HepG2 (cell line): ENCODE measurements at regions of chr5 and their contacts with region 1.

Region 1: GRCh38 chr5:61768692-61769281 is 436.7 kb downstream of the ZSWIM6 start:
- DNase-seq: peak; percentile 70
- ATAC-seq: peak; percentile 100
- H3K4me3 ChIP-seq: no peak overlapping the region
- H3K27ac ChIP-seq: no peak overlapping the region
- H3K4me1 ChIP-seq: no peaks in the 10 kb centered on the region
- H3K27me3 ChIP-seq: no peaks in the 10 kb centered on the region; a peak in 1 of 5 replicates
- CTCF ChIP-seq: peak; percentile 72
- EP300 ChIP-seq: no peak
- POLR2A ChIP-seq: no peak
- RAD21 ChIP-seq: peak; percentile 48; the same call in 1 of the 2 replicates

Region 2: DNA sequence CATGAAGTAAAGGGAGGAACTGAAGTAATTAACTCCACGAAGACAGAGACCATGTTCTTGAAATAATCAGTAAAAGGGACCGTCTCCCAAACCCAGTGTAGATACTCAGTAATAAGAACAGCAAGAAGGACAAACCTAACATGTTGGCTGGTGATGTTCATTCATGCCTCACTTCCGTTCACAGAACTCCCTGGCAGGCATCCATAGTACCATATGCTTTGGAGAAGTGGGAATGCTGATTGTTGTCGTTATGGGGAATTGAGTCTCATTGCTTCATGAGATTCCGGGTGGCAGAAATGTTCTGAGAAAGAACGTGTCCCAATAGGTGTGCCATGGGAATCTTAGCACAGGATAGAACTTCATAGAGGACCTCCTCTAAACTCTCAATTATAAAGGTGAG is 15.6 kb after region 1 on chr5:
- CTCF ChIA-PET with region 1: no interaction called
- POLR2A ChIA-PET with region 1: no interaction called
- in situ Hi-C with region 1: no loop called
- intact Hi-C with region 1: no loop called
- DNase-seq: no peak
- ATAC-seq: no peak
- H3K4me3 ChIP-seq: no peak overlapping the region
- H3K27ac ChIP-seq: no peak overlapping the region
- H3K4me1 ChIP-seq: no peaks in the 10 kb centered on the region
- H3K27me3 ChIP-seq: peaks cover 0 to 4% of the 10 kb centered on the region in 2 experiments; a peak in 2 of 5 replicates
- CTCF ChIP-seq: no peak
- EP300 ChIP-seq: no peak
- POLR2A ChIP-seq: no peak
- RAD21 ChIP-seq: no peak

Region 3: DNA sequence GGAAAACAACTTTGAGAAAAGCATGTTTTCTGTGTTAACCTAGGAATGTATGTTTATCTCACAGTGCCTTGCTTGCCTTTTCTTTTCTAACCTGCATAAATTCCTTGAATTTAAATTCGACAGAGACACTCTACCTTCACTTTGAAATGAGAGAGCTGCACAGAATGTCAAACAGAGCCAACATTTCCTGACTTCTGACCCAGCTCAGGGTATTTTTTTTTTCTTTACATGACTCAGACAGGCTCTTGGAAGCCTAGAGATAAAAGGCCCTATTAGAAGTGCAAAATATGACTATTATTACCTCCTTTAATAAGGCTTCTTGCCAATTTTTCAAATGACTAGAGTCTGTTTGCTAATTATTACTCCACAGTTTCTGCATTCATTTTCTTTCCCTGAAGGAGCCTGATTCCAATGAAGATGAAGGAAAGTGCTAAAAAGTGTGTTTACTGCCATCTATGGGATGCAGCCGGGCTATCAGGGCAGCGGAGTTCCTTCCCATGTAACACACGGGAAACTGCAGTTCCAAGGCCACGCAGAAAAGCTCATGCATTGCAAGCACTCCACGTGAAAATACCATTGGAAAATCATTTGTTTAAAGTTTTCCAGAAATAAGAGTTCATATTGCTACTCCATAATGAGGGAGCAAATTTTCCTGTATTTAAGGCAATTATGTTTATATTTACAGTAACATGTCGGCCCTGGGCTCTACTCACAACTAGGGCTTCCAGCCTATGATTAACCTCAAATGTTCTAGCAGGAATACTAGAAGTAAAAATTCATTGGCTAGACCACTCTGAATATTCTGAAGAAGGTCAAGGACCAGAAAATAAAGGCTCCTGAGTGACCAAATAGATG is 48.9 kb after region 1 on chr5:
- CTCF ChIA-PET with region 1: interaction called, 10 read pairs
- POLR2A ChIA-PET with region 1: no interaction called
- in situ Hi-C with region 1: no loop called
- intact Hi-C with region 1: loop called (anchors 2 kb)
- DNase-seq: peak; percentile 5
- ATAC-seq: peak; percentile 90
- H3K4me3 ChIP-seq: no peak overlapping the region
- H3K27ac ChIP-seq: no peak overlapping the region
- H3K4me1 ChIP-seq: no peaks in the 10 kb centered on the region; the same call in 1 of the 2 replicates
- H3K27me3 ChIP-seq: peaks cover 0 to 3% of the 10 kb centered on the region in 2 experiments; a peak in 3 of 5 replicates
- CTCF ChIP-seq: peak; percentile 67
- EP300 ChIP-seq: no peak
- POLR2A ChIP-seq: no peak
- RAD21 ChIP-seq: no peak

Region 4: GRCh38 chr5:62143268-62144229 is 374.8 kb after region 1 on chr5:
- CTCF ChIA-PET with region 1: no interaction called
- POLR2A ChIA-PET with region 1: no interaction called
- in situ Hi-C with region 1: no loop called
- intact Hi-C with region 1: loop called (anchors 5 kb)
- DNase-seq: peak; percentile 13
- ATAC-seq: peak; percentile 61
- H3K4me3 ChIP-seq: no peak overlapping the region; a peak in 1 of 6 replicates
- H3K27ac ChIP-seq: no peak overlapping the region
- H3K4me1 ChIP-seq: no peaks in the 10 kb centered on the region
- H3K27me3 ChIP-seq: peaks cover 0 to 14% of the 10 kb centered on the region in 2 experiments; a peak in 3 of 5 replicates
- CTCF ChIP-seq: peak; percentile 52
- EP300 ChIP-seq: no peak
- POLR2A ChIP-seq: no peak
- RAD21 ChIP-seq: no peak